ENCODE measurements at regions of chr7 and their contacts with region 1.

Region 1: DNA sequence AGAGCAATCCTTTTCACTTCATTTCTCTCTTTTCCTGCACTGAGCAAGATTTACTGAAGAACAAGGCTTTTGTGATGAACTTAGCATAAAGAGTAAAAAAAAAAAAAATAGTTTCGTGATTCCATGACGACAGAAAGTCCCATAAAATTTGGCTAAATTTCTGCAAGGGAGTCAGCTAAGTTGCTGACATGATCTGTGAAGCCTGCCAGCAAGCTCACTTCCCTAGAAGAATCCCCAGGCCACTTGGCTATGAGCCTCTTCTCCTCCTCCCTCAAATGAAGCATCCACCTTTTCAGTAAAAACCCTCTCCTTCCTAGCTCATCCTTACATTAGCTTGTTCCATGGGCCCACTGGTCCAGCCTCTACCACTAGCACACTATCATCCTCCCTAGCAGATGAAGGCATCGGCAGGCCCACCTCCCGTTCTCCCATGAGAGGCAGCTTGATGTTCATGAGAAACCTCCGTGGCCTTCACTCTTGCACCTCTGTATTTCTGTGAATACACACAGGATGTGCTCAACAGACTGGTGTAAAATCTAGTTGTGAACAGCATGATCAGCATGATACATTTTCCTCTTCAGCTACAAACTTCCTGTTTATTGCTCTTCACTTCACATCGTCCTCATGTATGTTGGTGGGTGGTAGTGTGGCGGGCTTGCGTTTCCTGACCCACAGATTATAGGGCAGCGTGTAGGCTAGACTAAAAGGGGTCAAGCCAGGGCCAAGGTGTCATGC is 30.9 kb downstream of the GIMAP8 start:
- DNase-seq: peak; percentile 63
- H3K4me3 Mint-ChIP-seq: peak overlapping the region; percentile 83
- H3K27ac Mint-ChIP-seq: peak overlapping the region; percentile 99
- H3K4me1 Mint-ChIP-seq: peaks cover 94% of the 10 kb centered on the region
- H3K27me3 Mint-ChIP-seq: no peaks in the 10 kb centered on the region

Region 2: GRCh38 chr7:150466477-150466876 is 14.9 kb before region 1 on chr7:
- CTCF ChIA-PET with region 1: interaction called, 3 read pairs
- POLR2A ChIA-PET with region 1: interaction called, 4 read pairs
- intact Hi-C with region 1: loop called (anchors 1 kb)
- DNase-seq: no peak
- H3K4me3 Mint-ChIP-seq: no peak overlapping the region
- H3K27ac Mint-ChIP-seq: no peak overlapping the region
- H3K4me1 Mint-ChIP-seq: peaks cover 75% of the 10 kb centered on the region
- H3K27me3 Mint-ChIP-seq: no peaks in the 10 kb centered on the region

Region 3: GRCh38 chr7:150502519-150502918 is 21.2 kb after region 1 on chr7:
- CTCF ChIA-PET with region 1: interaction called, 5 read pairs
- POLR2A ChIA-PET with region 1: interaction called, 5 read pairs
- intact Hi-C with region 1: loop called (anchors 1 kb)
- DNase-seq: peak; percentile 62
- H3K4me3 Mint-ChIP-seq: peak overlapping the region; percentile 36
- H3K27ac Mint-ChIP-seq: peak overlapping the region; percentile 98
- H3K4me1 Mint-ChIP-seq: peaks cover 82% of the 10 kb centered on the region
- H3K27me3 Mint-ChIP-seq: no peaks in the 10 kb centered on the region

Region 4: GRCh38 chr7:150586785-150587152 is 105.4 kb after region 1 on chr7:
- CTCF ChIA-PET with region 1: no interaction called
- POLR2A ChIA-PET with region 1: no interaction called
- intact Hi-C with region 1: no loop called
- DNase-seq: peak; percentile 48
- H3K4me3 Mint-ChIP-seq: peak overlapping the region; percentile 28
- H3K27ac Mint-ChIP-seq: peak overlapping the region; percentile 84
- H3K4me1 Mint-ChIP-seq: peaks cover 51% of the 10 kb centered on the region
- H3K27me3 Mint-ChIP-seq: no peaks in the 10 kb centered on the region